ENCODE measurements at regions of chr17 and their contacts with region 1.

Region 1: GRCh38 chr17:49223517-49224197 is 6.9 kb downstream of the PHOSPHO1 start:
- DNase-seq: peak in 1 of 2 experiments; percentile 97
- H3K4me3 ChIP-seq: peak overlapping the region; percentile 34 to 63 (median 55)
- H3K27ac ChIP-seq: no peak overlapping the region
- H3K4me1 ChIP-seq: peaks cover 0 to 8% (median 6%) of the 10 kb centered on the region in 4 experiments; a peak in 4 of 7 replicates
- H3K27me3 ChIP-seq: peaks cover 19 to 54% (median 43%) of the 10 kb centered on the region in 4 experiments
- CTCF ChIP-seq: peak; percentile 78 to 92 (median 88)
- EP300 ChIP-seq: no peak
- POLR2A ChIP-seq: no peak
- RAD21 ChIP-seq: peak; percentile 50 to 65

Region 2: GRCh38 chr17:48961516-48962233 is 262.0 kb before region 1 on chr17:
- CTCF ChIA-PET with region 1: no interaction called
- POLR2A ChIA-PET with region 1: no interaction called
- DNase-seq: peak in 1 of 2 experiments; percentile 66
- H3K4me3 ChIP-seq: peak overlapping the region in 2 of 4 experiments; percentile 14 to 25; a peak in 1 of 8 replicates
- H3K27ac ChIP-seq: no peak overlapping the region
- H3K4me1 ChIP-seq: peaks cover 8 to 17% (median 13%) of the 10 kb centered on the region in 4 experiments; a peak in 6 of 7 replicates
- H3K27me3 ChIP-seq: no peaks in the 10 kb centered on the region; a peak in 1 of 7 replicates
- CTCF ChIP-seq: no peak
- EP300 ChIP-seq: no peak
- POLR2A ChIP-seq: no peak
- RAD21 ChIP-seq: no peak

Region 3: GRCh38 chr17:49191917-49192741 is 31.5 kb before region 1 on chr17:
- CTCF ChIA-PET with region 1: interaction called, 43 read pairs
- POLR2A ChIA-PET with region 1: interaction called, 13 read pairs
- DNase-seq: peak; percentile 70 to 99
- H3K4me3 ChIP-seq: peak overlapping the region; percentile 78 to 97 (median 95)
- H3K27ac ChIP-seq: peak overlapping the region; percentile 82; the same call in 1 of the 2 replicates
- H3K4me1 ChIP-seq: peaks cover 0 to 3% (median 1%) of the 10 kb centered on the region in 4 experiments; a peak in 1 of 7 replicates
- H3K27me3 ChIP-seq: no peaks in the 10 kb centered on the region
- CTCF ChIP-seq: peak in 2 of 3 experiments; percentile 3 to 23; a peak in 2 of 4 replicates
- EP300 ChIP-seq: no peak
- POLR2A ChIP-seq: peak in 1 of 2 experiments; percentile 35; a peak in 2 of 3 replicates
- RAD21 ChIP-seq: no peak

Region 4: DNA sequence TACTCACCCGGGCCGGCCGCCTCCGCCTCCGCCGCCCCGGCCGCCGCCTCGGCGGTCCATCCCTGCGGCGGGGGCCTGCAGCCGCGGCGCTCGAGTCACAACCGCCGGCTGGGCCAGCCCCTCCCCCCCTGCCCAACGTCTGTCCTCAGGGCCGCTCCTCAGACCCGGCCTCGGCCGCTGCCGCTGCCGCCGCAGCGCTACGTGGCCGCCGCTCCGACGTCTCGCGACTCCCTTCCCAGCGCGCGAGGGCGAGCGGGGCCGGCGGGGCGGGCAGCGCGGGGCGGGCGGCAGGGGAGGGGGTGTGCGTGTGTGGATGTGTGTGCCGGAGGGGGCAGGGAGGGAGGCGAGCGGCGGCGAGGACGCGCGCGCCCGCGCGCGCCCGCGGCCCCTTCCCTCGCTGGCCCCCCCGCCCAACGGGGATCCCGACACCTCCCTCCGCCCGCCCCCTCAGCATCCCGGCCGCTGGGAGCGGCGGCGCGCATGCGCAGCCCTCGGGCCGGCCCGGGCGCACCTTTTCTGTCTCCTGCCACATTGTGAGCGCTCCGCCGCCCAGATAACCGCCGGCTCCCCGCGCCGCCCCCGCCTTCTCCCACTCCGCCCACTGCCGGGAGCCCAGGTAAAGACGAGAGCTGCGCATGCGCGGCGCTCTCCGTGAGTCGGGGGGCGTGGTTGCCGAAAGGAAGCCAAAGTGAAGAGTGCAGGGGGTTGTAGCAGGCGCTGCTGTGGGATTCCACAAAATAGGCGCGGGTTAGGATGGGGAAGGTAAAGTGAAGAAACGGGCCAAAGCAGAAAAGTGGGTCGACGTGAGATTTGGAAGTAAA is 138.5 kb after region 1 on chr17 and contains the start of gene ZNF652:
- CTCF ChIA-PET with region 1: no interaction called
- POLR2A ChIA-PET with region 1: no interaction called
- DNase-seq: peak; percentile 93 to 97
- H3K4me3 ChIP-seq: peak within 1 kb of the TSS; percentile 86 to 98 (median 89)
- H3K27ac ChIP-seq: peak within 1 kb of the TSS; percentile 82; the same call in 1 of the 2 replicates
- H3K4me1 ChIP-seq: peaks cover 5 to 14% (median 7%) of the 10 kb centered on the region in 4 experiments; a peak in 6 of 7 replicates
- H3K27me3 ChIP-seq: no peaks in the 10 kb centered on the region
- CTCF ChIP-seq: no peak
- EP300 ChIP-seq: no peak
- POLR2A ChIP-seq: peak in 1 of 2 experiments; percentile 11; a peak in 1 of 3 replicates
- RAD21 ChIP-seq: no peak
- total RNA-seq, gene ZNF652: 36.5 and 39.6 TPM in 2 replicates